ENCODE measurements at regions of chr12 and their contacts with region 1.

Region 1: DNA sequence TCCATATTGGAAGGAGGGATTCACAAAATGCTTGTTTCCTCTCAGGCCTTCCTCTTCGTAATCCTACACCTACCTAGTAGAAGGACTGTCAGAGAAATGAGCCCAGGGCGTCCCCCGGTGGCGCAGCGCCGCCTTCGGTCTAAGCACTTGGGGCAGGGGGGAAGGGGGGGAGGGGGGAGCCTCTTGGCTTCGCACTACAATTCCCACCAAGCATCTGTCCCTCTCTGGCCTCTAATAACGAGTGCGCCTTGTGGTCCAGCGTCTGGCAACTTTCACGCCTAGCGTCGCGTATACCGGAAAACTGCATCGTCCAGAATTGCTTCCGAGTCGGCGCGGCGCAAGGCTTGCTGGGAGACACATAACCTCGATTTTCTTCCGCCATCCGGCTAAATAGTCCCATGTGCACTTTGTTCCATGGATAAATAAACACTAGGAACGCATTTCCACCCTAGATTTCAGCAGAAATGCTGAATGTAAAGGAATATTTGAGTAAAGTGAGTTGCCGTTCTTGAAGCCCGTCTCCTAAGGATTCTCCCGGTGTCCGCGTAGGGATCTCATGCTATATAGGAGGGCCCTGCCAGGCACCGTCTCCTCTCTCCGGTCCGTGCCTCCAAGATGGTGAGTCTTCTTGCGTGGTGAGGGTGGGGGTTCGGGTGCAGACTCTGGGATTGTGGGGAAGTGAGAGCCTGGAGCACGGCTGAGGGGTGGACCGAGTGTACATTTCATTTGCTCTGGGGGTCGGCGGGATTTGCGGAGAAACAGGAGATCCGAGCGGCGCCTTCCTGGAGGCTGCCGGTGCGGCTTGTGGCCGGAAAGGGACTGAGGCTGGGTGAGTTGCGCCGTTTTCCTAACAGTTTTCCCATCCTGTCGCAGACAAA is at the start of gene RPS26:
- DNase-seq: peak; percentile 96
- H3K4me3 ChIP-seq: peak within 1 kb of the TSS; percentile 70 to 96 (median 82)
- H3K27ac ChIP-seq: peak within 1 kb of the TSS; percentile 90 to 99 (median 96)
- H3K4me1 ChIP-seq: peaks cover 15 to 38% (median 31%) of the 10 kb centered on the region in 6 donors
- H3K27me3 ChIP-seq: no peaks in the 10 kb centered on the region
- CTCF ChIP-seq: peak in 9 of 11 experiments; percentile 25 to 80 (median 61)
- POLR2A ChIP-seq: peak; percentile 60 to 87 (median 78)
- total RNA-seq, gene RPS26: 15.3 to 674 (median 76.8) TPM

Region 2: DNA sequence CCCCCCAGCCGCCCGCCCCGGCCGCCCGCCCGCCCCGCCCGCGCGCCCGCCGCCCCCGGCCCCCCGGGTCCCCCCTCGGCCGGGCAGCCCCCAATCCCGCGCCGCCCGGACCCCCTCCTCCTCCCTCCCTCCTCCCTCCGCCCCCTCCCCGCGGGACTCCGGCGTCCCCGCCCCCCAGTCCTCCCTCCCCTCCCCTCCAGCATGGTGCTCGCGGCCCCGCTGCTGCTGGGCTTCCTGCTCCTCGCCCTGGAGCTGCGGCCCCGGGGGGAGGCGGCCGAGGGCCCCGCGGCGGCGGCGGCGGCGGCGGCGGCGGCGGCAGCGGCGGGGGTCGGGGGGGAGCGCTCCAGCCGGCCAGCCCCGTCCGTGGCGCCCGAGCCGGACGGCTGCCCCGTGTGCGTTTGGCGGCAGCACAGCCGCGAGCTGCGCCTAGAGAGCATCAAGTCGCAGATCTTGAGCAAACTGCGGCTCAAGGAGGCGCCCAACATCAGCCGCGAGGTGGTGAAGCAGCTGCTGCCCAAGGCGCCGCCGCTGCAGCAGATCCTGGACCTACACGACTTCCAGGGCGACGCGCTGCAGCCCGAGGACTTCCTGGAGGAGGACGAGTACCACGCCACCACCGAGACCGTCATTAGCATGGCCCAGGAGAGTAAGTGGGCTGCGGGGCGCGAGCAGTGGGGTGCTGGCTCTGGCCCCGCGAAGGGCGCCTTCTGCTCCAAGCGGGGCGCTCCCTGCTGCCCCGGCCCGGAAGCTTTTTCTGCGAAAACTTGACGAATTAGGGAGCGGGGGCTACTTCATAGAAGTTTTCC is 298.5 kb before region 1 on chr12 and contains the start of gene GDF11:
- intact Hi-C with region 1: loop called (anchors 5 kb)
- DNase-seq: peak; percentile 91
- H3K4me3 ChIP-seq: peak within 1 kb of the TSS; percentile 56 to 97 (median 72)
- H3K27ac ChIP-seq: peak within 1 kb of the TSS in 6 of 8 donors; percentile 26 to 87 (median 72)
- H3K4me1 ChIP-seq: peaks cover 9 to 54% (median 39%) of the 10 kb centered on the region in 6 donors
- H3K27me3 ChIP-seq: peaks cover 0 to 27% (median 2%) of the 10 kb centered on the region in 7 donors
- CTCF ChIP-seq: no peak
- POLR2A ChIP-seq: no peak
- total RNA-seq, gene GDF11: 6.1 to 14.5 (median 10.7) TPM

Region 3: GRCh38 chr12:55996715-55997534 is 44.9 kb before region 1 on chr12 and contains the start of gene SUOX:
- intact Hi-C with region 1: loop called (anchors 5 kb)
- DNase-seq: peak; percentile 97
- H3K4me3 ChIP-seq: peak within 1 kb of the TSS; percentile 28 to 78 (median 52)
- H3K27ac ChIP-seq: peak within 1 kb of the TSS in 7 of 8 donors; percentile 65 to 88 (median 85)
- H3K4me1 ChIP-seq: peaks cover 0 to 35% (median 23%) of the 10 kb centered on the region in 6 donors
- H3K27me3 ChIP-seq: no peaks in the 10 kb centered on the region
- CTCF ChIP-seq: no peak
- POLR2A ChIP-seq: no peak
- total RNA-seq, gene SUOX: 13.1 to 29.1 (median 19.8) TPM

Region 4: DNA sequence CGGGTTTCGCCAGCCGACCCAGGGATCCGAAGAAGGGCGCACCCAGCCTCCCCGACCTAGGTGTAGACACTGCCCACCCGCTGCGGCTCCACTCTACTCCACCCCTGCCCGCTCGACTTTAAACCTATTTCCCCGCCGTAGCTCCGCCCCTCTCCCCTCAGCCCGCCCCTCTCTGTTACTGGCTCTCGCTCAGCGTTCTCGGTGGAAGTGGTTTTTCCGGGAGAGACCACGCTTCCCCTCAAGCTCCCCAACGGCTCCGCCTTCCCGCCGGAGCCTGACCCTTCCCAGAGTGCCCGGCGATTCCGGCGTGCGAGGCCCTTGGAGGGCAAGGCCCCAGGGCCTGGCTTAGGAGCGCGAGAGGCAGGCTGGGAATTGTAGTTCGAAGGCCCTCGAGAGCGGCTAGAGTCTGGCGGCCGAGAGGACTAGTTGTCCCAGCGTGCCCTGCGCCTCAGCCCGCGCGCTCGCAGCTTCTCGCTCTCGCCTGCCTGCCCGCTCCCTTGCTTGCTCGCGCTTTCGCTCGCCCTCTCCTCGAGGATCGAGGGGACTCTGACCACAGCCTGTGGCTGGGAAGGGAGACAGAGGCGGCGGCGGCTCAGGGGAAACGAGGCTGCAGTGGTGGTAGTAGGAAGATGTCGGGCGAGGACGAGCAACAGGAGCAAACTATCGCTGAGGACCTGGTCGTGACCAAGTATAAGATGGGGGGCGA is 62.5 kb after region 1 on chr12 and contains the start of gene PA2G4:
- intact Hi-C with region 1: loop called (anchors 2 kb)
- DNase-seq: peak; percentile 100
- H3K4me3 ChIP-seq: peak within 1 kb of the TSS; percentile 80 to 93 (median 88)
- H3K27ac ChIP-seq: peak within 1 kb of the TSS; percentile 83 to 94 (median 88)
- H3K4me1 ChIP-seq: peaks cover 19 to 49% (median 38%) of the 10 kb centered on the region in 6 donors
- H3K27me3 ChIP-seq: no peaks in the 10 kb centered on the region
- CTCF ChIP-seq: peak in 2 of 11 experiments; percentile 15 to 19
- POLR2A ChIP-seq: peak; percentile 13 to 92 (median 82)
- total RNA-seq, gene PA2G4: 70.5 to 92.8 (median 78.0) TPM

Measured in spleen (tissue), 13 donors.